Aorta (tissue), 5 donors: ENCODE measurements at regions of chr7 and their contacts with region 1.

Region 1: DNA sequence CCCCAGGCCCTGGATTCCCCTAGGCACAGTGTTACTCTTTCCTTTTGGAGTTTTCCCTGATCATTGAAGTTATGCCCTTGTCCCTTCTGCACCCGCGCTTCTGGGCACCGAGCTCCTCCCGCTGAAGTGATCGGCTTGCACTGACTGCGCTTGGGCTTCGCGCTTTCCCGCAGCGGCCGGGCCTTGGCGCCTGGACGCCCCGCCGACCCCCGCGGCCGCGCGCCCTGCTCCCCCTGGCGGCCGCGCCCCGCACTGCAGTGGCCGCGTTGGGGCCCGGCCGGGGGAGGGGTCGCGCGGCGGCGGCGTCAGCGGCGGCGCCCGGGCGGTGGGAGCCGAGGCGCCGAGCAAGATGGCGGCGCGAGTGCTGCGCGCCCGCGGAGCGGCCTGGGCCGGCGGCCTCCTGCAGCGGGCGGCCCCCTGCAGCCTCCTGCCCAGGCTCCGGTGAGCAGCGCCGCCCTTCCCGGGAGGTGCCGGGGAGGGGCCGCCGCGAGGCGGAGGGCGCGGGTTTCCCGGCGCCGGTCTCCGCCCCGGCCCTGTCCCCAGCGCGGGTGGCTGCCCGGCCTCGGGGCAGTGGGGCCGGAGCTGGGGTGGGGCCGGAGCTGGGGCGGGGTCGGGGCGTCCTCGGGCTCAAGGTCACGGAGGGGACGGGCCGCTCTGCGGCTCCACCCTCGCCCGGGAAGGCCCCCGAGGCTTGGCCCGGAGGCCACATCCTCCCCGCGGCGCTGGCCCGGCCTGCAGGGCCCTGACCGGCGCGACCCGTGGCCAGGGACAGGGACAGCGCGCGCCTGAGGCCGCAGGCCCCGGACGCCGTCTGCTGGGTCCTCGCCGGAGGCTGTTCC is at the start of gene NIPSNAP2:
- DNase-seq: peak; percentile 89 to 92
- ATAC-seq: peak; percentile 91
- H3K4me3 ChIP-seq: peak within 1 kb of the TSS; percentile 90 to 96
- H3K27ac ChIP-seq: peak within 1 kb of the TSS; percentile 72 to 85
- H3K4me1 ChIP-seq: no peaks in the 10 kb centered on the region
- H3K27me3 ChIP-seq: no peaks in the 10 kb centered on the region
- total RNA-seq, gene NIPSNAP2: 40.9 to 47.8 TPM

Region 2: DNA sequence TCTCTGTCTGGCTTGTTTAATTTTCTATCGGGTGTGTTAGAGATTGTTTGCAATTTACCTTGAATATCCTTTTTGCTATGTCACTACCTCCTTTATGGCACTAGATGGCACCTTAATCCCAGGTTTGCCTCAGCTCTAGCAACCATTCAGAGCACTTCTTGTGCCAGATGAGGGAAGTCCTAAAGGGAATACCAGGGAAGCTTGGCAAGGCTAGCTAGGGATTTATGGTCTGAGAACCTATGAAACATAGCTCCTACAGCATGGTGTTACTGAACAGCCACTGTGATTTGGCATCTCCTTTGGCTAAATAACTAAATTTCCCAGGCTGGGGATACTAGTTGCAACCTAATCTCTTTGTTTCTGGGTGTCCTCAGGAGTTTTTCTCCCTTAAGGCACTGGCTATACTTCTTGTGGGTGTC is 323.2 kb before region 1 on chr7:
- intact Hi-C with region 1: loop called (anchors 10 kb)
- DNase-seq: no peak
- ATAC-seq: peak; percentile 85
- H3K4me3 ChIP-seq: no peak overlapping the region
- H3K27ac ChIP-seq: no peak overlapping the region
- H3K4me1 ChIP-seq: no peaks in the 10 kb centered on the region
- H3K27me3 ChIP-seq: no peaks in the 10 kb centered on the region

Region 3: GRCh38 chr7:55887821-55888247 is 76.6 kb before region 1 on chr7:
- intact Hi-C with region 1: no loop called
- DNase-seq: no peak
- ATAC-seq: no peak
- H3K4me3 ChIP-seq: peak overlapping the region; percentile 77 to 85
- H3K27ac ChIP-seq: peak overlapping the region in 1 of 2 donors; percentile 12
- H3K4me1 ChIP-seq: no peaks in the 10 kb centered on the region
- H3K27me3 ChIP-seq: no peaks in the 10 kb centered on the region

Region 4: DNA sequence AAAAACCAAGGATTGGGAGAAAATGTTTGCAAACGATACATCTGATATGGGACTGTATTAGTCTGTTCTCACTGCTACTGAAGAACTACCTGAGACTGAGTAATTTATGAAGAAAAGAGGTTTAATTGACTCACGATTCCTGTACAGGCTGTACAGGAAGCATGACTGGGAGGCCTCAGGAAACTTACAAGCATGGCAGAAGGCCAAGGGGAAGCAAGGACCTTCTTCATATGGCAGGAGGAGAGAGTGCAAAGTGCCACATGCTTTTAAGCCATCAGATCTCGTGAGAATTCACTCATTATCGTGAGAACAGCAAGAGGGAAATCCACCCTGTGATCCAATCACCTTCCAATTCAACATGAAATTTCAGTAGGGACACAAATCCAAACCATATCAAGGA is 66.2 kb before region 1 on chr7:
- intact Hi-C with region 1: loop called in 1 of 2 experiments (anchors 5 kb)
- DNase-seq: no peak
- ATAC-seq: no peak
- H3K4me3 ChIP-seq: no peak overlapping the region
- H3K27ac ChIP-seq: no peak overlapping the region
- H3K4me1 ChIP-seq: no peaks in the 10 kb centered on the region
- H3K27me3 ChIP-seq: no peaks in the 10 kb centered on the region

Region 5: GRCh38 chr7:55977831-55978230 is 13.4 kb after region 1 on chr7:
- intact Hi-C with region 1: no loop called
- DNase-seq: no peak
- ATAC-seq: no peak
- H3K4me3 ChIP-seq: no peak overlapping the region
- H3K27ac ChIP-seq: no peak overlapping the region
- H3K4me1 ChIP-seq: no peaks in the 10 kb centered on the region
- H3K27me3 ChIP-seq: no peaks in the 10 kb centered on the region